A549 (cell line): ENCODE measurements at regions of chr1 and their contacts with region 1.

Region 1: GRCh38 chr1:206912445-206913095 is 9.2 kb downstream of the FCMR start:
- DNase-seq: peak; percentile 77 to 87
- ATAC-seq: peak; percentile 58 to 71; a peak in 4 of 6 replicates
- H3K4me3 ChIP-seq: no peak overlapping the region
- H3K27ac ChIP-seq: no peak overlapping the region
- H3K4me1 ChIP-seq: peaks cover 4% of the 10 kb centered on the region; the same call in 1 of the 3 replicates
- CTCF ChIP-seq: peak; percentile 79
- EP300 ChIP-seq: no peak
- POLR2A ChIP-seq: no peak
- RAD21 ChIP-seq: peak; percentile 85 to 89

Region 2: GRCh38 chr1:206663832-206664652 is 248.5 kb before region 1 on chr1:
- CTCF ChIA-PET with region 1: interaction called, 23 read pairs
- POLR2A ChIA-PET with region 1: no interaction called
- DNase-seq: peak; percentile 64 to 65
- ATAC-seq: peak; percentile 84 to 91
- H3K4me3 ChIP-seq: no peak overlapping the region
- H3K27ac ChIP-seq: peak overlapping the region in 1 of 2 experiments; percentile 37; a peak in 2 of 6 replicates
- H3K4me1 ChIP-seq: peaks cover 7% of the 10 kb centered on the region; the same call in 1 of the 3 replicates
- CTCF ChIP-seq: peak; percentile 86
- EP300 ChIP-seq: no peak
- POLR2A ChIP-seq: no peak
- RAD21 ChIP-seq: peak; percentile 82 to 87

Region 3: DNA sequence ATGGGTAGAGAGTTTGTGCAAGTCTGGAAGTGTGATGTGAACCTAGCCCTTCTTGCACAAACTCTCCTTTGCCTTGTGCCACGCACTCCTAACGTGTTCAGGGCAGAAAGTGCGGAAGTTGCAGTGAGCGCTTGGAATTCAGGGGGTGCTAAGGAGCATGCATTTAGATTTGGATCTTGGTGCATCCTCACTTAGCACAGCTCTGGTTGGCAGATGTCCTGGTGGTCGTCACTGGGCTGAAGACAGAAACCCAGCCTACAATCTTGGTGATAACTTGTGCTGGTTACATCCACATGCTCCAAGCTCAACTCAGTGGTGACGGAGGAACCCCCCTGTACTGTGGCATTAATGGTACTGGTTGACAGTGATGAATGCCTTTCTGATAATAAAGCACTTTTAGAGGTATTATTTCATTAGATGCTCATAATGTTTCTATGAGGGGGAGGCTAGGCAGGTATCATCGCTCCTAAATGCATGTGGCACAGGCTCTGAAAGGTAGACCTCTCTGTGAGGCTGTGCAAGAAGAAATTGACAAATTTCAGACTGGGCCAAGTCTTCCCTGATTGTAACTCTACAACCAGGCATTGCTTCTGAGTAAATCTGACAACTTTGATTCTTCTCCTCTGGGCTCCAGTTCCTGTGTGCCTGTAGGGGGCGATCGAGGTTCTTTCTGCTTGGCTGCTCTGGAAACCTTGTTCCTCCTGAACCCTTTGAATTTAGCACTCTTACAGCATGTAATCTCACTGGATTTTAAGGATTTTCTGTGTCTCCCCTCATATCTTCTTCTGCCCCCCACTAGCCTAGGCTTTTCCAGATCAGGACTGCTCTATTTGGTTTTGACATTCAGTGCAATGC is 187.2 kb before region 1 on chr1:
- CTCF ChIA-PET with region 1: interaction called, 123 read pairs
- POLR2A ChIA-PET with region 1: no interaction called
- DNase-seq: peak; percentile 57
- ATAC-seq: peak in 1 of 2 experiments; percentile 44; a peak in 3 of 6 replicates
- H3K4me3 ChIP-seq: no peak overlapping the region
- H3K27ac ChIP-seq: peak overlapping the region; percentile 90 to 92
- H3K4me1 ChIP-seq: peaks cover 62% of the 10 kb centered on the region
- CTCF ChIP-seq: peak; percentile 46; the same call in 2 of the 3 replicates
- EP300 ChIP-seq: no peak
- POLR2A ChIP-seq: no peak
- RAD21 ChIP-seq: peak in 1 of 2 experiments; percentile 36; a peak in 2 of 5 replicates

Region 4: DNA sequence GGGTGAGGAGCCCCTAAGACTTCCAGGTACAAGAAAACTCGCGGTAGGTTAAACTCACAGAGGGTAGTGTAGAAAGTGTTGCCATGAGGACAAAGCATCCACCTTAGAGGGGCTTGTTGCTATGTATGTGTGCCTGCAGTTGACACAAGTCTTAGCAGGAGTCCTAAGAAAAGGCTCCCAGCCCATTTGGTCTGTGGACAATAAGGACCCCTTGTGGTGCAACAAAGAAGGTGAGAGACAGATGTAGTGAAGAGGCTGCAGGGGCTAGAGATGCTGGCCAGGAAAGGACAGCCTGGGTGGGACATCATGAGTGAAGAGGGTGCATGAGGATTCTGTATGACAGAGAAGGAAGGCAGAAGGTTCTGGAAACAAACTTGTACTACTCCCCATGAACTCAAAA is 104.0 kb before region 1 on chr1:
- CTCF ChIA-PET with region 1: interaction called, 15 read pairs
- POLR2A ChIA-PET with region 1: no interaction called
- DNase-seq: peak in 1 of 2 experiments; percentile 30
- ATAC-seq: peak in 1 of 2 experiments; percentile 84; a peak in 3 of 6 replicates
- H3K4me3 ChIP-seq: no peak overlapping the region
- H3K27ac ChIP-seq: no peak overlapping the region
- H3K4me1 ChIP-seq: no peaks in the 10 kb centered on the region
- CTCF ChIP-seq: no peak; the same call in 2 of the 3 replicates
- EP300 ChIP-seq: no peak
- POLR2A ChIP-seq: no peak
- RAD21 ChIP-seq: peak; percentile 27 to 55; a peak in 2 of 5 replicates

Region 5: GRCh38 chr1:206872139-206872538 is 40.4 kb before region 1 on chr1:
- CTCF ChIA-PET with region 1: interaction called, 17 read pairs
- POLR2A ChIA-PET with region 1: no interaction called
- DNase-seq: no peak
- ATAC-seq: no peak
- H3K4me3 ChIP-seq: no peak overlapping the region
- H3K27ac ChIP-seq: no peak overlapping the region
- H3K4me1 ChIP-seq: no peaks in the 10 kb centered on the region
- CTCF ChIP-seq: no peak
- EP300 ChIP-seq: no peak
- POLR2A ChIP-seq: no peak
- RAD21 ChIP-seq: no peak

Region 6: GRCh38 chr1:206941858-206942387 is 29.4 kb after region 1 on chr1:
- CTCF ChIA-PET with region 1: interaction called, 10 read pairs
- POLR2A ChIA-PET with region 1: no interaction called
- DNase-seq: no peak
- ATAC-seq: no peak
- H3K4me3 ChIP-seq: no peak overlapping the region
- H3K27ac ChIP-seq: no peak overlapping the region
- H3K4me1 ChIP-seq: peaks cover 5% of the 10 kb centered on the region; the same call in 1 of the 3 replicates
- CTCF ChIP-seq: no peak
- EP300 ChIP-seq: no peak
- POLR2A ChIP-seq: no peak
- RAD21 ChIP-seq: no peak